ENCODE measurements at regions of chr6 and their contacts with region 1.

Region 1: DNA sequence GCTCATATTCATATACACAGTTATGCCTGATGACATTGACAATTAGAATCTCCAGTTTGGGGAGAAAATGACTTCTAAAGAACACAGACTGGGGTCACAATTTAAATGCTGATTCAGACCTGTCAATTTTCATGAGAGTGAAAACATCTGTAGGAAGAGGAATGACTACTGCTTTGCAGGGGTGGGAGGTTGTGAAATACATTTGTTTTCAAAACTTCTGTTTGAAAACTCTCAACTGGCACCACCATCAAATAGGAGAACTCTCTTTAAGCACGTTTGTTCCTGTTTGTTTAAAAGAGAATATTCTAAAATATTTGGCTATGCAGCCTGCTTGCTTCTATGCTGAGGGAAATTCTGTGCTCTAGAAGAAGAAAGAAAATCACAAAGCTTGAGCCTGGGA is 50.8 kb upstream of the ADGRF5 start:
- DNase-seq: no peak

Region 2: DNA sequence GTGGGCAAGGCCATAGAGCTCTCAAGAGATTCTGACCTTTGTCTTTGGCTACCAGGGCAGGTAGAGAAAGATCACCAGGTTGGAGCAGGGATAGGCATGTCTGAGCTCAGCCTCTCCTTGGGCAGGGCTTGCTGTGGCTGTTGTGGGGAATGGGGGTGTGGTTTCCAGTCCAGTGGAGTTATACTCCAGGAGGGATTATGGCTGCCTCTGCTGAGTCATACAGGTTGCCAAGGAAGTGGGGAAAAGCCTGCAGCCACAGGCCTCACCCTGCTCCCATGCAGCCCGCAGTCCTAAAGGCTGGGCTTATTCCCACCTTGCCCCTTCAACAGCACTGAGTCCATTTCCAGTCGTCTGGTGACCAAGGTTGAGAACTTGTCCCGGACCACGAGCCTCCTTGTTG is 157.4 kb before region 1 on chr6:
- intact Hi-C with region 1: no loop called
- DNase-seq: peak; percentile 58

Region 3: GRCh38 chr6:46862381-46862780 is 110.2 kb before region 1 on chr6:
- intact Hi-C with region 1: loop called in 1 of 2 experiments (anchors 10 kb)
- DNase-seq: no peak

Region 4: GRCh38 chr6:47057830-47058540 is 85.5 kb after region 1 on chr6:
- intact Hi-C with region 1: no loop called
- DNase-seq: no peak